Activated T-helper 2 cell treated with anti-CD3 and anti-CD28 coated beads, Interferon-gamma antibody, Interleukin-2, Interleukin-4, amounts not matched to agents 10 μg/mL and 5 μg/mL and 100 μg/mL, durations not matched to agents 14 hours and 24 hours and 36 hours (primary cell): ENCODE measurements at regions of chr14 and their contacts with region 1.

Region 1: GRCh38 chr14:90235179-90235976 is 21.0 kb upstream of the PSMC1 start:
- DNase-seq: peak; percentile 58
- H3K4me3 Mint-ChIP-seq: no peak overlapping the region
- H3K27ac Mint-ChIP-seq: no peak overlapping the region
- H3K4me1 Mint-ChIP-seq: peaks cover 3% of the 10 kb centered on the region
- H3K27me3 Mint-ChIP-seq: peaks cover 9% of the 10 kb centered on the region

Region 2: GRCh38 chr14:89936658-89937185 is 298.7 kb before region 1 on chr14:
- intact Hi-C with region 1: loop called (anchors 1 kb)
- DNase-seq: no peak
- H3K4me3 Mint-ChIP-seq: no peak overlapping the region
- H3K27ac Mint-ChIP-seq: no peak overlapping the region
- H3K4me1 Mint-ChIP-seq: peaks cover under 1% of the 10 kb centered on the region
- H3K27me3 Mint-ChIP-seq: no peaks in the 10 kb centered on the region

Region 3: DNA sequence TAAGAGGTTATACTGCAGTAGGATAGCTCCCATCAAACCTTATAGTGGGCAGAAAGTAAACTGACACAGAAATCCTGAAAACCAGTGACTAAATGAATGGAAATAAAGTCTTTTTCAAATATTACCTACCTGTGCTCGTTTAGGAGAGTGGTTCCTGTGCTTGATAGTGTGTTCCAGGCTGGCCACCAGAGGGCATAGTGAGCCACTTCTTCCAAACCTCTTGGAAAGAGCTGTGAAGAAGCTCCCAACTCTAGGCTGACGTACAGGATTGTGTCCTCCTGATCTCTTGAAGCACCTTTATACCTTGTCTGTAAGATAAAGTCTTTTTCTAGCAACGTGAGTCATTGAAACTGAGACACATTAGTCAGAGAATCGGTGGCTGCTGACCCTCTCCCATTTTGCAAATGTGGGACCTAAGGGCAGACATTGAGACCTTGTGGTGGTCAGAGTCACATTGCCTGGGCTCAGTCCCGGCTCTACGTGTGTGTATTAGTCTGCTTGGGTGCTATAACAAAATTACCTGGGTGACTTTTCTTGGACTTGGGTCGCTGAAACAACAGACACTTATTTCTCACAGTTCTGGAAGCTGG is 262.0 kb before region 1 on chr14:
- intact Hi-C with region 1: loop called (anchors 10 kb)
- DNase-seq: no peak
- H3K4me3 Mint-ChIP-seq: no peak overlapping the region
- H3K27ac Mint-ChIP-seq: no peak overlapping the region
- H3K4me1 Mint-ChIP-seq: peaks cover 4% of the 10 kb centered on the region
- H3K27me3 Mint-ChIP-seq: no peaks in the 10 kb centered on the region

Region 4: GRCh38 chr14:90533591-90534021 is 298.2 kb after region 1 on chr14:
- intact Hi-C with region 1: no loop called
- DNase-seq: no peak
- H3K4me3 Mint-ChIP-seq: no peak overlapping the region
- H3K27ac Mint-ChIP-seq: no peak overlapping the region
- H3K4me1 Mint-ChIP-seq: peaks cover 6% of the 10 kb centered on the region
- H3K27me3 Mint-ChIP-seq: no peaks in the 10 kb centered on the region